ENCODE measurements at regions of chr1 and their contacts with region 1.

Region 1: GRCh38 chr1:51768971-51769588 is 109.4 kb downstream of the NRDC start:
- DNase-seq: no peak
- H3K4me3 ChIP-seq: no peak overlapping the region
- H3K27ac ChIP-seq: no peak overlapping the region
- H3K4me1 ChIP-seq: no peaks in the 10 kb centered on the region
- H3K27me3 ChIP-seq: no peaks in the 10 kb centered on the region
- CTCF ChIP-seq: peak in 2 of 3 experiments; percentile 54 to 68; a peak in 3 of 4 replicates
- EP300 ChIP-seq: no peak
- POLR2A ChIP-seq: no peak
- RAD21 ChIP-seq: peak; percentile 64 to 74

Region 2: GRCh38 chr1:51627678-51628077 is 141.4 kb before region 1 on chr1:
- CTCF ChIA-PET with region 1: interaction called, 30 read pairs
- POLR2A ChIA-PET with region 1: no interaction called
- DNase-seq: no peak
- H3K4me3 ChIP-seq: no peak overlapping the region
- H3K27ac ChIP-seq: no peak overlapping the region
- H3K4me1 ChIP-seq: no peaks in the 10 kb centered on the region; a peak in 1 of 7 replicates
- H3K27me3 ChIP-seq: no peaks in the 10 kb centered on the region
- CTCF ChIP-seq: peak in 2 of 3 experiments; percentile 36 to 63; a peak in 3 of 4 replicates
- EP300 ChIP-seq: no peak
- POLR2A ChIP-seq: no peak
- RAD21 ChIP-seq: peak; percentile 73 to 80

Region 3: GRCh38 chr1:51697166-51697565 is 71.9 kb before region 1 on chr1:
- CTCF ChIA-PET with region 1: no interaction called
- POLR2A ChIA-PET with region 1: no interaction called
- DNase-seq: no peak
- H3K4me3 ChIP-seq: no peak overlapping the region
- H3K27ac ChIP-seq: no peak overlapping the region
- H3K4me1 ChIP-seq: no peaks in the 10 kb centered on the region
- H3K27me3 ChIP-seq: no peaks in the 10 kb centered on the region
- CTCF ChIP-seq: no peak
- EP300 ChIP-seq: no peak
- POLR2A ChIP-seq: no peak
- RAD21 ChIP-seq: no peak

Region 4: GRCh38 chr1:51750218-51750617 is 18.9 kb before region 1 on chr1:
- CTCF ChIA-PET with region 1: interaction called, 24 read pairs
- POLR2A ChIA-PET with region 1: no interaction called
- DNase-seq: no peak
- H3K4me3 ChIP-seq: no peak overlapping the region
- H3K27ac ChIP-seq: no peak overlapping the region
- H3K4me1 ChIP-seq: no peaks in the 10 kb centered on the region; a peak in 1 of 7 replicates
- H3K27me3 ChIP-seq: no peaks in the 10 kb centered on the region
- CTCF ChIP-seq: no peak
- EP300 ChIP-seq: no peak
- POLR2A ChIP-seq: no peak
- RAD21 ChIP-seq: no peak

Region 5: DNA sequence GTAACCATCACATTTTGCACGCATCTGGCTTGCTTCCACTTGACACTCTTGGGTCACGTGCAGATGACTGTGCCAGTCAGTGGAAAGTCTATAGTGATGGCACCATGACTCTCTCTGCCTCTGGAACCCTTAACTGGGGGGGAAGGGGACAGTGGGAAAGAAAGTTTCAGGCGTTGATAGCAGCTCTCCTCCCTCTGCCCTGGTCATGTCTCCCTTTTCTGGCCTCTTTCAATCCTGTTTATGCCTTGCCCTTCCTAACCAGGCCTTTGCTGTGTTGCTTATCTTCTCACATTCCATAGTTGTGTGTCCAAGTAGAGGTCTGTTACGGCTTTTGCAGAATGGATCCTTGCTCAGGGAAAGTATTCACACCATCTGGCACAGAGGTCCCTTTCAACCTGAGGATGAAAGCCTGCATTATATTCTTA is 15.9 kb after region 1 on chr1:
- CTCF ChIA-PET with region 1: interaction called, 13 read pairs
- POLR2A ChIA-PET with region 1: interaction called, 5 read pairs
- DNase-seq: no peak
- H3K4me3 ChIP-seq: no peak overlapping the region
- H3K27ac ChIP-seq: no peak overlapping the region
- H3K4me1 ChIP-seq: no peaks in the 10 kb centered on the region
- H3K27me3 ChIP-seq: no peaks in the 10 kb centered on the region
- CTCF ChIP-seq: no peak
- EP300 ChIP-seq: no peak
- POLR2A ChIP-seq: no peak
- RAD21 ChIP-seq: no peak

Region 6: GRCh38 chr1:51792864-51793263 is 23.8 kb after region 1 on chr1:
- CTCF ChIA-PET with region 1: interaction called, 12 read pairs
- POLR2A ChIA-PET with region 1: interaction called, 3 read pairs
- DNase-seq: no peak
- H3K4me3 ChIP-seq: no peak overlapping the region
- H3K27ac ChIP-seq: no peak overlapping the region
- H3K4me1 ChIP-seq: no peaks in the 10 kb centered on the region
- H3K27me3 ChIP-seq: no peaks in the 10 kb centered on the region
- CTCF ChIP-seq: no peak
- EP300 ChIP-seq: no peak
- POLR2A ChIP-seq: no peak
- RAD21 ChIP-seq: no peak

Region 7: DNA sequence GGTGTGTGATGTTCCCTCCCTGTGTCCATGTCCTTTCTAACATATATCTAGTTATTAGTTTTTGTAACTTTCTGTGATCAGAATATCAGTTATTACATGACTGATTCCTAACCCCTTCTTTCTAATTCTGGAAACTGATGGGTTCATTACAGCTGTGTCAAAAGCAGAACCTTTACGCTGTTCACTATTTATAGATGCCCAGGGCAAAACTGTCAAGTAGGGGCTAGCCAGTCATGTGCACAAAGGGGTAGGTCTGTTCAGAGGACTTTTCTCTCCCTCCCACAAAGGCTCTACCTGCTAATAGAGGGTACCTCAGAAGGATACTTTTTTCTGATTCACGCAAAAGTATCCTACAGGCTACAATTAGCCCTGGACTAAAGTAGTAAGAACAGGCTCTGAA is 30.3 kb after region 1 on chr1:
- CTCF ChIA-PET with region 1: interaction called, 10 read pairs
- POLR2A ChIA-PET with region 1: no interaction called
- DNase-seq: no peak
- H3K4me3 ChIP-seq: no peak overlapping the region
- H3K27ac ChIP-seq: no peak overlapping the region
- H3K4me1 ChIP-seq: no peaks in the 10 kb centered on the region
- H3K27me3 ChIP-seq: no peaks in the 10 kb centered on the region
- CTCF ChIP-seq: no peak
- EP300 ChIP-seq: no peak
- POLR2A ChIP-seq: no peak
- RAD21 ChIP-seq: no peak

Region 8: DNA sequence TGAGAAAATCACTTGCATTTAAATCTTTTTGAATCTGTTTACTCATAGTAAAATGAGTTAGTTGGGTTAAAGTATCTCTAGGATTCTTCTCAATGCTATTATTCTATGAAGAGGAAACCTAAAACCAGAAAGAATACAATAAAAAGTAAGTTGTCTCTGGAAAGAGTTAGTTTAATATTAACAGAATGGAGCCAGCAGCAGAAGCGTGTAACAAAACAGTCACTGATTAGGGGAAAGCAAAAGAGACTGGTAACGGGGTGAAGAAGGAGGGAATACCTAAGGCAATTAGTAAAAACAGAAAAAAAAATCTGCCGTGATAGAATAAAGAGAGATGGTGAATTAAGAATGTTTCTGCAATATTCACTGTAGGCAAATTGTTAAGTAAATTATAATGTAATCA is 49.4 kb after region 1 on chr1:
- CTCF ChIA-PET with region 1: no interaction called
- POLR2A ChIA-PET with region 1: no interaction called
- DNase-seq: no peak
- H3K4me3 ChIP-seq: no peak overlapping the region
- H3K27ac ChIP-seq: no peak overlapping the region
- H3K4me1 ChIP-seq: no peaks in the 10 kb centered on the region
- H3K27me3 ChIP-seq: no peaks in the 10 kb centered on the region
- CTCF ChIP-seq: no peak
- EP300 ChIP-seq: no peak
- POLR2A ChIP-seq: no peak
- RAD21 ChIP-seq: no peak